ENCODE measurements at regions of chr12 and their contacts with region 1.

Region 1: DNA sequence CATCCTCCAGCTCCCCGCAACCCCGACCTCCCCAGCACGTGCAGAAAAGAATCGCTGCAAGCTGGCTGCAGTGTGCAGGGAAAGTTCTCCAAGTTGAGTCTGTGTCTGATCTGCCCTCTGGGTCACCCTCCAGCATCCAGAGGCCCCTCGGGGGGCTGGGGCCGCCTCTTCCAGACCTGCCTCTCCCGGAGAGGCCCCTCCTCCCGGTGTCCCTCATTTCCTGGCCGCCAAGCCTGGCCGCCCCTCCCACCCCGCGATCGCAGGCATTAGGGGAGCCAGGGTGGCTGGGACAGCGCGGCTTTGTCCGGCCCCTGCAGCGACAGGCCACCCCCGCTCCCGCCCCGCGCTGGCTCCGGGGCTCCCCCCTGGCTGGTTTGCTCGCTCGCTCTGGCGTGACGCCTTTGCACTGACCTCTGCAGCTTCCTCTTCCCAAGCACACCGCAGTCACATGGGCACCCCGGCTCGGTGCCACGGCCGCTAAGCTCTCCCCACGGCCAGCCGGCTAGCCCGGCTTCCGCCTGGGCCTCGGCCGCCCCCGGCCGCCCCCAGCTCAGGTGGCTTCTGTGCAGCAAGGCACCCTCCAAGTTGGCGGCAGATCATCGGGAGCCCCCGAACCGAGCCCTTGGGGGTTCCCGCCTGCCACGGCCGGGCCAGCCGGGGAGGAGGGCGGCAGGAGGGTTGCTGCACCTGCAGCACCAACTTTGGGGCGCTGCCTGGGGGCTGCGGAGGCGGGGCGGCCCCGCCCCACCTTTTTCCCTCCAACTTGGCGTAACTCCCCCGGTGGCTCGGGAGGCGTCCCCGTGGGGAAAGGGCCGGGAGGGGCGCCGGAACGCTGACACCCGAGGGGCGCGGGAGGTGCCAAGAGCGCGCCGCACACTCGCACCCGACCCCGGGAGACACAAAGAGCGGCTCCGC is 43.7 kb downstream of the KDM2B start:
- DNase-seq: peak; percentile 83
- ATAC-seq: peak; percentile 51
- H3K4me3 Mint-ChIP-seq: peak overlapping the region; percentile 73
- H3K27ac Mint-ChIP-seq: peak overlapping the region; percentile 80
- H3K4me1 Mint-ChIP-seq: peaks cover 52% of the 10 kb centered on the region
- H3K27me3 Mint-ChIP-seq: no peaks in the 10 kb centered on the region
- CTCF ChIP-seq: no peak

Region 2: GRCh38 chr12:121550974-121551634 is 13.9 kb after region 1 on chr12:
- CTCF ChIA-PET with region 1: interaction called, 14 read pairs
- POLR2A ChIA-PET with region 1: interaction called, 3 read pairs
- intact Hi-C with region 1: no loop called
- DNase-seq: no peak
- ATAC-seq: no peak
- H3K4me3 Mint-ChIP-seq: no peak overlapping the region
- H3K27ac Mint-ChIP-seq: no peak overlapping the region
- H3K4me1 Mint-ChIP-seq: peaks cover 17% of the 10 kb centered on the region
- H3K27me3 Mint-ChIP-seq: no peaks in the 10 kb centered on the region
- CTCF ChIP-seq: no peak

Region 3: DNA sequence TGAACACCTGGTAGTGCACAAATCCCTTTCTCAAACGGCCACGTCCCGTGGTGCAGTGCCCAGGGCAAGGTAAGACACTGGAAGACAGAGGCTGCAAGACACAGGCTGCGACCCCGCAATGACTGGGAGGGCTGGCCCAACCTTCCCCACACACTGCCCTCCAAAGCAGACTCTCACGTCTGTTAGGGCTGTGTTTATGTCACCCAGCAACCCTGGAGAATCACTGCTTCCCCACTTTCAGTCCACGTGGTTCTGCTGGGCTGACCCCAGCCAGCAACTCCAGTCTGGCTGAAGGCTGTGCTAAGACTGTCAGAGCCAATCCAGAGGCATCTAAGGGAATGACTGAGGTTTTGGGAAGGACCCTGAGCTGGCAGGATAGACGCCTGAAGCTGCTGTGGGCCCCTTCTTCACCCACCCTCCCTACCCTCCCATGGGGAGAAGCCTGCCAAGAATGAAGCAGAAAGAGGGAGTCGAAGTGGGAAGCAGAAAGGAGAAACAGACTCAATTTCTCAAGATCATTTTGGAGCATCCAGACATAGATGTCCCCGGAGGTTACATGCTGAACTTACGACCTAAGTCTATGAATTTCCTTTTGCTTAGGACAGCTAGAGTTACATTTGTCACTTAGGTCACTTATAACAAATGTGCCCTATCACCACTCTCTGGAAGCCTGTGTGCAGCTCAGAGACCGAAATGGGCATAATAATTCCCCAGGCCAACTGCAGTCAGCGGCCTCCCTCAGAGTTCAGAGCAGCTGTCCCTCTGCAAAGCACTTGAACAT is 32.0 kb after region 1 on chr12:
- CTCF ChIA-PET with region 1: no interaction called
- POLR2A ChIA-PET with region 1: no interaction called
- intact Hi-C with region 1: no loop called
- DNase-seq: no peak
- ATAC-seq: no peak
- H3K4me3 Mint-ChIP-seq: no peak overlapping the region
- H3K27ac Mint-ChIP-seq: no peak overlapping the region
- H3K4me1 Mint-ChIP-seq: peaks cover 12% of the 10 kb centered on the region
- H3K27me3 Mint-ChIP-seq: no peaks in the 10 kb centered on the region
- CTCF ChIP-seq: no peak

Region 4: GRCh38 chr12:121579981-121580868 is 43.1 kb after region 1 on chr12:
- CTCF ChIA-PET with region 1: no interaction called
- POLR2A ChIA-PET with region 1: interaction called, 9 read pairs
- intact Hi-C with region 1: loop called (anchors 5 kb)
- DNase-seq: peak; percentile 90
- ATAC-seq: peak; percentile 70
- H3K4me3 Mint-ChIP-seq: peak overlapping the region; percentile 97
- H3K27ac Mint-ChIP-seq: peak overlapping the region; percentile 99
- H3K4me1 Mint-ChIP-seq: peaks cover 30% of the 10 kb centered on the region
- H3K27me3 Mint-ChIP-seq: no peaks in the 10 kb centered on the region
- CTCF ChIP-seq: no peak

Region 5: DNA sequence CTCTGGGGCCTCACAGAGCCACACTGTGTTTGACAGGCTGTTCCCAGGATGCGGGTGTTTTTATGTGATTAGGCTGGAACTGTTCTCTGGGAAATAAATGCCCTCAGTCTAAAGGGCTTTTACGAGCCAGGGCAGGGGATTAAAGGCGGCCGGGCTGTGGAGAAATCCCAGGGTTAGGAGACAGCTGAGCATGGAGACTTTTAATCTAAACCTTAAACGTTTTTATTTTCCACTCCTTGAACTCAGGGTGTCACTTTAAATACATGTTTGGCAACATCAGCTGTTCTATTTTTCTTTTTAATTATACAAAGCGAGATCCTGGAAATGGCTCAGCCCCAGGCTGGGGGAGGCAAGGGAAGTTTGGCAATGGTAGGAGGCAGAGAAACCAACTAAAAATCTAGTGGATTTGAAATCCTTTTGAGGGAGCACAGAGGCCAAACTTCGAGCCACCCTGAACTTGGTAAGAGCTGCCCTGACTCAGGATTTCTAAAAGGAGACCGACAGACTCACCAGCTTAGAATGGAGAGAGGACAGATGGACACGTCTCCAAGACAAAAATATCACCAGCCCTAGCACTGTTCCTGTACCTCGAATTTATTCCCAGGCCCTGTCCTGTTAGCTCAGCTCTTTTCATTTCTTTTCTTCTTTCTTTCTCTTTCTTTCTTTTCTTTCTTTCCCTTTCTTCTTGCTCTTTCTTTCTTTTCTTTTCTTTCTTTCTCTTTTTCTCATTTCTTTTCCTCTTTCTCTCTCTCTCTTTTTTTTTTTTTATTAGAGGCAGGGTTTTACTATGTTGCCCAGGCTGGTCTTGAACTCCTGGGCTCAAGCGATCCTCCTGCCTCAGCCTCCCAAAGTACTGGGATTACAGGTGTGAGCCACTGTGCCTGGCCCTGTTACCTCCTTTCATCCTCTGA is 73.3 kb after region 1 on chr12:
- CTCF ChIA-PET with region 1: no interaction called
- POLR2A ChIA-PET with region 1: no interaction called
- intact Hi-C with region 1: no loop called
- DNase-seq: no peak
- ATAC-seq: no peak
- H3K4me3 Mint-ChIP-seq: no peak overlapping the region
- H3K27ac Mint-ChIP-seq: no peak overlapping the region
- H3K4me1 Mint-ChIP-seq: no peaks in the 10 kb centered on the region
- H3K27me3 Mint-ChIP-seq: no peaks in the 10 kb centered on the region
- CTCF ChIP-seq: peak; percentile 29

Region 6: GRCh38 chr12:121678716-121679580 is 141.8 kb after region 1 on chr12:
- CTCF ChIA-PET with region 1: no interaction called
- POLR2A ChIA-PET with region 1: no interaction called
- intact Hi-C with region 1: loop called (anchors 5 kb)
- DNase-seq: peak; percentile 30
- ATAC-seq: peak; percentile 34
- H3K4me3 Mint-ChIP-seq: no peak overlapping the region
- H3K27ac Mint-ChIP-seq: peak overlapping the region; percentile 56
- H3K4me1 Mint-ChIP-seq: peaks cover 9% of the 10 kb centered on the region
- H3K27me3 Mint-ChIP-seq: no peaks in the 10 kb centered on the region
- CTCF ChIP-seq: no peak

Region 7: GRCh38 chr12:121917979-121918678 is 381.0 kb after region 1 on chr12 and contains the start of gene CFAP251:
- CTCF ChIA-PET with region 1: no interaction called
- POLR2A ChIA-PET with region 1: no interaction called
- intact Hi-C with region 1: no loop called
- DNase-seq: peak; percentile 99
- ATAC-seq: peak; percentile 98
- H3K4me3 Mint-ChIP-seq: peak within 1 kb of the TSS; percentile 76
- H3K27ac Mint-ChIP-seq: peak within 1 kb of the TSS; percentile 89
- H3K4me1 Mint-ChIP-seq: peaks cover 12% of the 10 kb centered on the region
- H3K27me3 Mint-ChIP-seq: no peaks in the 10 kb centered on the region
- CTCF ChIP-seq: peak; percentile 66
- total RNA-seq, gene CFAP251: 2.0 to 2.9 TPM